A549 (cell line): ENCODE measurements at regions of chr2 and their contacts with region 1.

Region 1: DNA sequence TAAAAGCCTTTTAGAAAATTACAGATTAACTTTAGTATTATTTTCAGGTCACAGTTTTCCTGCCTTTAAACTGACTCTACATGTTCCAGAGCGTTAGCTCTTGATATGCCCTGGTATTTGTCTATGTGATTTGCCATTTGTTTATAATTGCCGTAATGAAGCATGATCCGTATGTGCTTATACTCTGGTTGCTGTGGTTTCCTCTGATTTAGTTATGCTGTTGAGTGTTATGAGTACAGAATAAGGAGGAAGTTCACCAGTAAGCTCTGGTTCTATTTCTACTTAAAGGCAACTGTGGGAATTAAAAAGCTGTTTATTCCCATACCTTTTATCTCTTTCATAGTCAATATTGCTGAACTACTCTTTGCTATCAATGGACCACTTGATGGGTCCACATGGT is 123.5 kb downstream of the OSBPL6 start:
- DNase-seq: no peak
- ATAC-seq: no peak
- H3K4me3 ChIP-seq: no peak overlapping the region
- H3K27ac ChIP-seq: no peak overlapping the region
- H3K4me1 ChIP-seq: no peaks in the 10 kb centered on the region
- CTCF ChIP-seq: no peak
- EP300 ChIP-seq: no peak
- POLR2A ChIP-seq: no peak
- RAD21 ChIP-seq: no peak

Region 2: DNA sequence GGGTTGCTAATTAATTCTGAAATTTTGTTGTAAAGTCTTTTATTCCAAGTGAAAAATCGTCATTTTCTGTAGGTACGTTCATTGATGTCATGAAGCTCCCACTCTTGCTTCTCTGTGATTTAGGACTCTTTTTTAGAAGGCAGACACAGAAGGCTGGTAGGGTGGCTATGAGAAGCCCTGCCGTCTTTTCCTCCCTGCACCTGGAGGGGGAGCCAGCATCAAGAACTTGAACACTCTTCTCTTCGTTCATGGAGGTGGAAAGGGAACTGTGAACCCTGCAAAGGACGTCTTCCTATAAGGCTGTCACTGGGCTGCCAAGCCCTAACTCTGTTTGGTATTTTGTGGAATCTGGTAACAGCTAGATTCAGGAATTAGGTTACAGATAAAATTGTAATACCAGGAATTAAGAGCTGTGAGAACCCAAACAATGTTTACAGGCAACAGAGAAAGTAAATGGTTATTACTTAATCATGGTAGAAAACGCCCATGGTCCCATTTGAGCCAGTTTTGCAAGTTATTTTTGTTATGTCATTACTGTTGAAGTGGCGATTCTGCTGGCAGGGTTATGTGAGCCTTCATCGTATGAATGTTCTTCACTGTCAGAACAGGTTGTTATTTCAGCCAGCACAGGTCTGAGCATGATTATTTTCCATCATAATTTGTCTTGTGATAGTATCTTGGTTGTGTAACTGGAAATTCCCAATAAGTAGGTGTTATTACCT is 11.3 kb before region 1 on chr2:
- CTCF ChIA-PET with region 1: interaction called, 5 read pairs
- POLR2A ChIA-PET with region 1: interaction called, 10 read pairs
- DNase-seq: peak; percentile 10 to 62
- ATAC-seq: peak; percentile 92 to 99
- H3K4me3 ChIP-seq: no peak overlapping the region
- H3K27ac ChIP-seq: no peak overlapping the region
- H3K4me1 ChIP-seq: no peaks in the 10 kb centered on the region
- CTCF ChIP-seq: peak; percentile 46
- EP300 ChIP-seq: no peak
- POLR2A ChIP-seq: no peak
- RAD21 ChIP-seq: peak; percentile 49 to 61; a peak in 4 of 5 replicates

Region 3: DNA sequence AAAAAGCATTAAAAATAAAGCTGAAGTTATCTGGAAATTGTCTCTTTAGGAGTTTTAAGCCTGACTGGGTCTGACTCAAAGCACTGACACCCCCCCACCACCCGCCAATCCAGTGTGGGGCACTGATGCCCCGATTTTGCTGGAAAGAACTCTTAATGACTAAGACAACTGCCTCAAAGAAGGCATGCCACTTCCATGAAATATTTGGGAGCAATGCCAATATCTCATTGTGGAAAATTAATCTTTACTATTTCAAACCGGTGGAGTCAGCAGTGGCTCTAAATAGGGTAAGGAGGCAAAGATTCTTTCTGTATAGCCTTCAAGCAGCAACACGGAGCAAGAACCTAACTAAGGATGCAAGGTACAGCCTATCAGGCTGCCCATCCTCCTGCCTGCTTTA is 156.1 kb after region 1 on chr2:
- CTCF ChIA-PET with region 1: no interaction called
- POLR2A ChIA-PET with region 1: no interaction called
- DNase-seq: no peak
- ATAC-seq: no peak
- H3K4me3 ChIP-seq: no peak overlapping the region
- H3K27ac ChIP-seq: no peak overlapping the region
- H3K4me1 ChIP-seq: peaks cover 14% of the 10 kb centered on the region
- CTCF ChIP-seq: no peak
- EP300 ChIP-seq: no peak
- POLR2A ChIP-seq: no peak
- RAD21 ChIP-seq: no peak